HCT116 (cell line): ENCODE measurements at regions of chr11 and their contacts with region 1.

Region 1: GRCh38 chr11:64787526-64788320 is 9.4 kb upstream of the SF1 start:
- DNase-seq: no peak
- ATAC-seq: peak; percentile 91
- H3K4me3 ChIP-seq: no peak overlapping the region
- H3K27ac ChIP-seq: 0 out of 2 replicates have a peak overlapping the region, but pooled peaks have one; percentile 1
- H3K4me1 ChIP-seq: peaks cover 2 to 9% of the 10 kb centered on the region in 2 experiments; a peak in 3 of 4 replicates
- H3K27me3 ChIP-seq: no peaks in the 10 kb centered on the region
- CTCF ChIP-seq: peak; percentile 71 to 95 (median 93); a peak in 5 of 6 replicates
- POLR2A ChIP-seq: no peak
- RAD21 ChIP-seq: peak; percentile 85

Region 2: GRCh38 chr11:64887757-64888405 is 100.2 kb after region 1 on chr11:
- CTCF ChIA-PET with region 1: no interaction called
- POLR2A ChIA-PET with region 1: no interaction called
- RAD21 ChIA-PET with region 1: no interaction called
- intact Hi-C with region 1: loop called (anchors 5 kb)
- DNase-seq: peak; percentile 39
- ATAC-seq: peak; percentile 92
- H3K4me3 ChIP-seq: peak overlapping the region; percentile 31 to 51
- H3K27ac ChIP-seq: peak overlapping the region; percentile 40
- H3K4me1 ChIP-seq: peaks cover 7 to 31% of the 10 kb centered on the region in 2 experiments; a peak in 3 of 4 replicates
- H3K27me3 ChIP-seq: no peaks in the 10 kb centered on the region
- CTCF ChIP-seq: peak; percentile 83 to 93 (median 88)
- POLR2A ChIP-seq: peak; percentile 40
- RAD21 ChIP-seq: peak; percentile 63

Region 3: DNA sequence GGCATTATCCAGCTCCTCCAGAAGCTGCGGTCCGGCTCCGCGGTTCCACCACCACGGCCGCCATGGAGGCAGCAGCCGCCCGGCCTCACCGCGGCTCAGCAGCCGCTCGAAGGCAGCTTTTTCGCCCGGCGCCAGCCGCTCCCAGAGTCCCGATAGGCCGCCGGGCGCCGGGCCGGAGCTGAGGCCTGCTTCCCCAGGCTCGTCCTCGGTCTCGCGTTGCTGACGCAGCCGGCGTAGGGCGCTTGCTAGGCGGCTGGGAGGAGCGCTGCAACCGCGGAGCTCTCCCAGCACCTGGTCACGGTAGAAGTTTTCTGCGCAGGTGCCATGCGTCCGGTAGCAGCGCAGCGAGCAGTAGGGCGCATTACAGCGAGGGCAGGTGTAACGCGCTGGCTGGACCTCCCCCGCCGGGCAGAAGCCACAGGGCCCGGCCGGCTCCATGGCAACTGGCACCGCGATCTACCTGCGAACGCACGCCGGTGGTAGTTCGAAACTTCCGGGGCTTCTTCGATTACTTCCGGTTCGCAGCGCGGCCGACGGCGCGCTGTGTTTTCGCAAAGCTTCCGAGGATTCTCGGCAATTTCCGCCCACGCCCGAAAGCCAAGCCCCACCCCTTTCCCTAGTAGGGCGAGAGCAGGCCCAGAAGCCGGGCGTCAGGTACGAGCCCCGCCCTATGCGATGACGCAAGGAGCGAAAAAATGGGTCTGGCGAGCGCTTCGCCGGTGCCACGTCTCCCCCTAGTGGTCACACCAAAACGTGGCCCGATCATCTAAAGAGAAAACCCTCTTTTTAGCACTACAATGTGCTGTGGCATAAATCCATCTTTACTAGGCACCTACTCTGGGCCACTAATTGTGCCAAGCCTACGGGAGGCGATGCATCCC is 329.7 kb after region 1 on chr11 and contains the start of gene ZNHIT2:
- CTCF ChIA-PET with region 1: no interaction called
- POLR2A ChIA-PET with region 1: no interaction called
- RAD21 ChIA-PET with region 1: no interaction called
- intact Hi-C with region 1: loop called (anchors 5 kb)
- DNase-seq: peak; percentile 98
- ATAC-seq: peak; percentile 70
- H3K4me3 ChIP-seq: peak within 1 kb of the TSS; percentile 88 to 90
- H3K27ac ChIP-seq: peak within 1 kb of the TSS; percentile 95
- H3K4me1 ChIP-seq: peaks cover 17 to 45% of the 10 kb centered on the region in 2 experiments; a peak in 3 of 4 replicates
- H3K27me3 ChIP-seq: no peaks in the 10 kb centered on the region
- CTCF ChIP-seq: peak in 2 of 3 experiments; percentile 83 to 93; a peak in 4 of 6 replicates
- POLR2A ChIP-seq: peak; percentile 87
- RAD21 ChIP-seq: no peak
- total RNA-seq, gene ZNHIT2: 18.8 TPM